Esophagus muscularis mucosa (tissue), 4 donors: ENCODE measurements at regions of chr4 and their contacts with region 1.

Region 1: GRCh38 chr4:39365830-39366771 is at the start of gene RFC1:
- DNase-seq: peak; percentile 98
- H3K4me3 ChIP-seq: peak within 1 kb of the TSS; percentile 82 to 95 (median 86)
- H3K27ac ChIP-seq: peak within 1 kb of the TSS; percentile 86 to 91 (median 88)
- H3K4me1 ChIP-seq: peaks cover 13 to 36% (median 30%) of the 10 kb centered on the region in 4 donors
- H3K27me3 ChIP-seq: no peaks in the 10 kb centered on the region
- CTCF ChIP-seq: no peak
- EP300 ChIP-seq: no peak
- POLR2A ChIP-seq: no peak
- total RNA-seq, gene RFC1: 30.6 to 37.4 (median 33.9) TPM

Region 2: GRCh38 chr4:39324446-39324845 is 41.7 kb before region 1 on chr4:
- intact Hi-C with region 1: no loop called
- DNase-seq: no peak
- H3K4me3 ChIP-seq: no peak overlapping the region
- H3K27ac ChIP-seq: no peak overlapping the region
- H3K4me1 ChIP-seq: no peaks in the 10 kb centered on the region
- H3K27me3 ChIP-seq: no peaks in the 10 kb centered on the region
- CTCF ChIP-seq: no peak
- EP300 ChIP-seq: no peak
- POLR2A ChIP-seq: no peak

Region 3: DNA sequence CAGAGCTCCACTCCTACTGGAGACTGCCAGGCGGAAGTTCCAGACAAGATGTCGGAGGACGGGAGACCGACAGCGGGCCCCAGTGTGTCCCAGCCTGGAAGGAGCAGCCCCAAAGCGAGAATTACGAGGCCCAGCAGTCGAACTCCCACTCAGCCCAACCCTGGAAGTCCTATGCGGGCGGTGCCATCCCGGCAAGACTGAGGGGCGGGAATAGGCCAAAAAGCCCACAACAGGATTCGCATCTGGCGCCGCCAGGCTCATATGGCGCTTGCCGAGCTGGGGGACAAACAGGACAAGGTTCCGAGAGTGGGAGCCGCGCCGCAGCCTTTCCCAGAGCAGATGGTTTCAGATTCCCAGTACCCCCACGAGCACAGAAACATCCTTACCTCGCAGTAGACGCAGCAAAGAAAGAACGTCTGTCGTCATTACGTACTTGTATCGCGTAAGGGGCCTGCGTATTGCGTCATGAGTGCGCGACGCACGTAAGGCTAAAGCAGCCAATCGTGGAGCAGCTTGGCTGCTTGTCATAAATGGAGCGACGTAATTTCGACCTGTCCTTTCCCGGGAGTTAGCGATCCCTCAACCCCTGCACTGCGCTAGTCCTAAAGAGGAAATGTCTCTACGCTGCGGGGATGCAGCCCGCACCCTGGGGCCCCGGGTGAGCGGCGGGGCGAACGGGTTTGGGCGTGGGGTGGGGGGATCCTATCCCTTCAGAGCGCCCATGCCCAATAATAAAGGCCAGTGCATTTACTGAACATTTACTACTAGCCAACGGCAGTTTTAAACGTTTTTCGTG is 92.6 kb after region 1 on chr4 and contains the starts of genes LIAS and RPL9:
- intact Hi-C with region 1: loop called (anchors 5 kb)
- DNase-seq: peak; percentile 99
- H3K4me3 ChIP-seq: peak within 1 kb of the TSS; percentile 70 to 86 (median 77)
- H3K27ac ChIP-seq: peak within 1 kb of the TSS; percentile 95 to 96 (median 96)
- H3K4me1 ChIP-seq: peaks cover 24 to 47% (median 42%) of the 10 kb centered on the region in 4 donors
- H3K27me3 ChIP-seq: no peaks in the 10 kb centered on the region
- CTCF ChIP-seq: peak in 1 of 3 experiments; percentile 12
- EP300 ChIP-seq: no peak
- POLR2A ChIP-seq: peak; percentile 92
- total RNA-seq, gene LIAS: 8.5 to 11.6 (median 9.7) TPM
- total RNA-seq, gene RPL9: 1,962 to 6,543 (median 3,653) TPM

Region 4: GRCh38 chr4:39638354-39639240 is 272.5 kb after region 1 on chr4 and contains the start of gene SMIM14:
- intact Hi-C with region 1: no loop called
- DNase-seq: peak; percentile 99
- H3K4me3 ChIP-seq: peak within 1 kb of the TSS; percentile 72 to 96 (median 92)
- H3K27ac ChIP-seq: peak within 1 kb of the TSS; percentile 94 to 100 (median 97)
- H3K4me1 ChIP-seq: peaks cover 21 to 37% (median 29%) of the 10 kb centered on the region in 4 donors
- H3K27me3 ChIP-seq: no peaks in the 10 kb centered on the region
- CTCF ChIP-seq: peak; percentile 18 to 30 (median 27)
- EP300 ChIP-seq: no peak
- POLR2A ChIP-seq: peak; percentile 93
- total RNA-seq, gene SMIM14: 27.3 to 39.0 (median 29.6) TPM

Region 5: GRCh38 chr4:39697740-39698423 is 331.8 kb after region 1 on chr4 and contains the start of gene UBE2K:
- intact Hi-C with region 1: no loop called
- DNase-seq: peak; percentile 94
- H3K4me3 ChIP-seq: peak within 1 kb of the TSS; percentile 85 to 92 (median 88)
- H3K27ac ChIP-seq: peak within 1 kb of the TSS; percentile 92 to 96 (median 94)
- H3K4me1 ChIP-seq: peaks cover 12 to 50% (median 40%) of the 10 kb centered on the region in 4 donors
- H3K27me3 ChIP-seq: no peaks in the 10 kb centered on the region
- CTCF ChIP-seq: peak in 1 of 3 experiments; percentile 18
- EP300 ChIP-seq: no peak
- POLR2A ChIP-seq: peak; percentile 78
- total RNA-seq, gene UBE2K: 31.7 to 41.5 (median 34.3) TPM